MCF 10A (cell line): ENCODE measurements at regions of chr1 and their contacts with region 1.

Region 1: DNA sequence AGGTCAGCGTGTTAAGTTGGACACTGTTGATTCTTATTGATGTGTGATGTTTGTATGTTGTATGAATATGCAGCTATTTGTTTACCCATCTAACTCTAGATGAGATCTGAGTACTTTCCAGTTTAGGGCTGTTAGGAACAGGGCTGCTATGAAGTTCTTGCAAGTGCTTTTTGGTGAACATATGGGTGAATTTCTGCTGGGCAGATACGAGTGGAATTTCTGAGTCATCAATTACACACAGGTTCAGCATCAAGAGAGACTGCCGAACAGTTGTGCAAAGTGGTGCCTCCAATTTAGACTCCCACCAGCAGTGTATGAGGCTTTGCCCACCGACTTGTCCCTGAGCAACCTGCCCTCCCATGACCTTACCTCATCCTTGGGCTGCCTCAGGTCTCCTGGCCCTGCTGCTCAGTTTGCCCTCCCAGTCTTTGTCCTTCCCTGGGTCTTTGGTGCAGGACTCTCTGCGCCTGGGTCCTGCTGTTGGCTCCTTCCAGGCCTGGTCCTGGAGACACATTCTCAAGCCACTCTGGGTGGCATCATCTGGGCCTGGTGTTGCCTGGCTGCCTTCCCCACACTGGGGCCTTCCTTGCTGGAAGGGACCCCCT is 343.6 kb downstream of the PTPRU start:
- DNase-seq: peak; percentile 33
- H3K4me3 Mint-ChIP-seq: no peak overlapping the region
- H3K27ac Mint-ChIP-seq: no peak overlapping the region
- H3K4me1 Mint-ChIP-seq: peaks cover 52% of the 10 kb centered on the region
- H3K27me3 Mint-ChIP-seq: no peaks in the 10 kb centered on the region
- CTCF ChIP-seq: no peak

Region 2: GRCh38 chr1:29649189-29650040 is 69.5 kb after region 1 on chr1:
- CTCF ChIA-PET with region 1: no interaction called
- POLR2A ChIA-PET with region 1: interaction called, 3 read pairs
- intact Hi-C with region 1: loop called (anchors 5 kb)
- DNase-seq: peak; percentile 63
- H3K4me3 Mint-ChIP-seq: peak overlapping the region; percentile 69
- H3K27ac Mint-ChIP-seq: peak overlapping the region; percentile 70
- H3K4me1 Mint-ChIP-seq: peaks cover 28% of the 10 kb centered on the region
- H3K27me3 Mint-ChIP-seq: no peaks in the 10 kb centered on the region
- CTCF ChIP-seq: no peak